GM13976 (cell line): ENCODE measurements at regions of chr1 and their contacts with region 1.

Region 1: GRCh38 chr1:1906185-1907097 is 8.6 kb upstream of the CALML6 start:
- DNase-seq: peak; percentile 86
- CTCF ChIP-seq: peak; percentile 91

Region 2: DNA sequence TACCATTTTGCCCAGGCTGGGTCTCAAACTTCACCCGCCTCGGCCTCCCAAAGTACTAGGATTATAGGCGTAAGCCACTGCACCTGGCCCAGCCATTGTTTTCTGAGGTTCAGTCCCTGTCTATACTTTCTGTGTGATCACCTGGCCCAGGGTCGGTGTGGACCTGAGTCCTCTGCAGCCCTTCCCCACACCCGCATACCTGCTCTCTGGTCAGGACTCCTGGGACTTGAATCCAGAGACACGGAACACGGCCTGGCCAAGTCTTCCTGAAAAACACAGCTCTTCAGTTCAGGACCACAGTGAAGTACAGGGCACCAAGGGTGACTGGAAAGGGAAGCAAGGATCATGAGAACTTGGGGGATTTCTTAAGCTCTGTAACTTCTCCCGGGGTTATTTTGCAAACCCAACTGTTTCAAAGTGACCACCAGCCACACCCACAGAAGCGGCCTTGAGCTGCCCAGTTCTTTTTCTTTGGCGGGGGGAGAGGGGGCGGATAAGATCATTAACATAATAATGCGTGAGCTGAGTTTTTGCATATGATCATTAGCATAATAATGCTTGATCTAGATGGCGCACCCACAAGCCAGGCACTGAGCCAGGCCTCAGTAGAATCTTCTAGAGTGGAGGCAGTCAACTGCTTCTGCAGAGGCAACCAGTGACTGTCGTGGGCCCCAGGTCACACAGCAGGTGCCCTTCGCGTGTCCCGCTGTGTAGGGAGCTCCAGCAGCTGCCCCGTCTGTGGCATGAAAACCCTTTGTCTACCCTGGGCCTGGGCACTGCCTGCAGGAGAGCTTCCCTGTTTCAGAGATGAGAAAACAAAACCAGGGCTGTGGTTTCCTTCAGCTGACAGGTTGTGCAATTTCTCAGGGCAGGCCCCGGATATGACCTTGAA is 126.5 kb before region 1 on chr1:
- in situ Hi-C with region 1: loop called (anchors 10 kb)
- DNase-seq: peak; percentile 83
- CTCF ChIP-seq: peak; percentile 17

Region 3: GRCh38 chr1:1841575-1841995 is 64.9 kb before region 1 on chr1:
- in situ Hi-C with region 1: no loop called
- DNase-seq: no peak
- CTCF ChIP-seq: peak; percentile 11